ENCODE measurements at regions of chr3 and their contacts with region 1.

Region 1: DNA sequence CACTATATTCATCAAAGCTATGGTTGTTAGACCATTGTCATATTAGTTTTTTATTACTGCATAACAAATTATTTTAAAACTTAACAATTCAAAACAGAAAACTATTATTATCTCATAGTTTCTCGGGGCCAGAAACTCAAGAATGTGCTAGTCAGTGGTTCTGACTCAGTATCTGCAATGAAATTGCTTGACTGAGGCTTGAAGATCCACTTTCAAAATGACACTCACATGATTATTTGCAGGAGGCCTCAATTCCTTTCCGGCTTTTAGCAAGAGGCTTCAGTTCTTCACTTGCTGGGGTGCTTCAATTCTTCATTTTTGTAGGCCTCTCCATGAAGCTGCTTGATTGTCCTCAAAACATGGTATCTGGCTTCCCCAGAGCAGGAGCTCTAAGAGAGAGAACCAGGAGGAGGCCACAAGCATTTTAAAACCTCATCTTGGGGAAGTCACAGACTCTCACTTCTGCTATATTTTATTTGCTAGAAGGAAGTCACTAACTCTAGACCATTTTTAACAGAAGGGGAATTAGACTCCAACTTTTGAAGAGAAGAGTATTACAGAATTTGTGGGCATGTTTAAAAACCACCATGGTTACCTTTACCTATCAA is 383.7 kb downstream of the MFSD1 start:
- DNase-seq: no peak
- H3K4me3 ChIP-seq: no peak overlapping the region
- H3K27ac ChIP-seq: no peak overlapping the region
- H3K4me1 ChIP-seq: no peaks in the 10 kb centered on the region
- H3K27me3 ChIP-seq: no peaks in the 10 kb centered on the region
- CTCF ChIP-seq: no peak

Region 2: GRCh38 chr3:158991146-158991705 is 194.3 kb before region 1 on chr3:
- CTCF ChIA-PET with region 1: no interaction called
- POLR2A ChIA-PET with region 1: no interaction called
- intact Hi-C with region 1: no loop called
- DNase-seq: no peak
- H3K4me3 ChIP-seq: no peak overlapping the region
- H3K27ac ChIP-seq: no peak overlapping the region
- H3K4me1 ChIP-seq: no peaks in the 10 kb centered on the region
- H3K27me3 ChIP-seq: no peaks in the 10 kb centered on the region
- CTCF ChIP-seq: no peak

Region 3: GRCh38 chr3:159340877-159341500 is 155.4 kb after region 1 on chr3:
- CTCF ChIA-PET with region 1: no interaction called
- POLR2A ChIA-PET with region 1: no interaction called
- intact Hi-C with region 1: no loop called
- DNase-seq: no peak
- H3K4me3 ChIP-seq: no peak overlapping the region
- H3K27ac ChIP-seq: no peak overlapping the region
- H3K4me1 ChIP-seq: no peaks in the 10 kb centered on the region
- H3K27me3 ChIP-seq: no peaks in the 10 kb centered on the region
- CTCF ChIP-seq: no peak

Region 4: GRCh38 chr3:159892171-159892795 is 706.7 kb after region 1 on chr3:
- CTCF ChIA-PET with region 1: no interaction called
- POLR2A ChIA-PET with region 1: interaction called, 14 read pairs
- intact Hi-C with region 1: no loop called
- DNase-seq: no peak
- H3K4me3 ChIP-seq: no peak overlapping the region
- H3K27ac ChIP-seq: no peak overlapping the region
- H3K4me1 ChIP-seq: peaks cover 3% of the 10 kb centered on the region
- H3K27me3 ChIP-seq: no peaks in the 10 kb centered on the region
- CTCF ChIP-seq: no peak

Measured in A673 (cell line).